OCI-LY7 (cell line): ENCODE measurements at regions of chr17 and their contacts with region 1.

Region 1: GRCh38 chr17:49677933-49678847 is at the start of gene SPOP:
- DNase-seq: peak; percentile 99
- H3K4me3 ChIP-seq: peak within 1 kb of the TSS; percentile 87
- H3K27ac ChIP-seq: peak within 1 kb of the TSS; percentile 88
- H3K4me1 ChIP-seq: peaks cover 24% of the 10 kb centered on the region
- CTCF ChIP-seq: no peak
- total RNA-seq, gene SPOP: 37.8 and 61.0 TPM in 2 replicates

Region 2: GRCh38 chr17:49574323-49574781 is 103.8 kb before region 1 on chr17:
- CTCF ChIA-PET with region 1: no interaction called
- POLR2A ChIA-PET with region 1: no interaction called
- intact Hi-C with region 1: loop called (anchors 5 kb)
- DNase-seq: no peak
- H3K4me3 ChIP-seq: no peak overlapping the region
- H3K27ac ChIP-seq: no peak overlapping the region
- H3K4me1 ChIP-seq: peaks cover 10% of the 10 kb centered on the region
- CTCF ChIP-seq: no peak

Region 3: DNA sequence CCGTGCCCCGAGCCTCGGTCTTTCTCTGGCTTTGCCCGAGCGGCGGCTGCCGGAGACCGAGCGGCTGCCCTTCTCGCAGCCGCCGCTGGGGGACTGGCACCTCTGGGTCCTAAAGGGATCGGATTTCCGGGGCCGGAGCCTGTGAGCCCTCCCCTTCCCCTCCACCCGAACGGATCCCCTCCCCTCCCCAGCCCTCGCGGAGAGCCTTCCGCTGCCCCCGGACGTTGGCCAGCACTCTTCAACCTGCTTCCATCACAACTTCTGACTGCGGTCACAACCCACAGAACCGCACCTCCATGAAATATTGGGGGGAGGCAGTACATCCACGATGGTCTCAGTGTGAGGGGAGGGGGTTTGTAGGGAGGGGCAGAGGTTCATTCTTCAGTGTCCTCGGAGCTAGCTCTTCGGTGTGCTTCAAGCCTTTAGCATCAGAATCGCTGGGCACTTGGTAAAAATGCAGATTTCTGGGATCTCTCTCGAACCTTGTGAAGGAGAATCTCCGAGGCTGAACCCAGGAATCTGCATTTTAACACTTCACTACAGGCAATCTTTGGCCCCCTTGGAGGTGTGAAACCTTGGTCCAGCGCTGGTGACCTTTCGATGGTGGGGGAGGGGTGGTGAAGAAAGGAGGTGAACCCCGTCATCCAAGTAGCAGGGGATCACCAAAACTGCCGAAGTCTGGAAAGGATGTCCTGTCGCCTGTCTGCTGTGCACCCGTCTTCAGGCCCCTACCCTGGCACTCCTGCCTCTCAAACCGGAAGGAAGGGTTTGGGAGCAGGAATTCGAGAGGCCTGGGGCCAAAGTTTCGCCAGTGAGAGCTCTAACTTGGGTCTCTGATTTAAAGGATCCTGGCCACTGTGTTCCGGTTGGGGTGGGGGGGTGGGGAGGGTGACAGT is 473.1 kb after region 1 on chr17:
- CTCF ChIA-PET with region 1: no interaction called
- POLR2A ChIA-PET with region 1: no interaction called
- intact Hi-C with region 1: loop called (anchors 10 kb)
- DNase-seq: peak; percentile 95
- H3K4me3 ChIP-seq: peak overlapping the region; percentile 89
- H3K27ac ChIP-seq: peak overlapping the region; percentile 87
- H3K4me1 ChIP-seq: peaks cover 44% of the 10 kb centered on the region
- CTCF ChIP-seq: peak; percentile 60